Endothelial cell of umbilical vein (primary cell): ENCODE measurements at regions of chr12 and their contacts with region 1.

Region 1: DNA sequence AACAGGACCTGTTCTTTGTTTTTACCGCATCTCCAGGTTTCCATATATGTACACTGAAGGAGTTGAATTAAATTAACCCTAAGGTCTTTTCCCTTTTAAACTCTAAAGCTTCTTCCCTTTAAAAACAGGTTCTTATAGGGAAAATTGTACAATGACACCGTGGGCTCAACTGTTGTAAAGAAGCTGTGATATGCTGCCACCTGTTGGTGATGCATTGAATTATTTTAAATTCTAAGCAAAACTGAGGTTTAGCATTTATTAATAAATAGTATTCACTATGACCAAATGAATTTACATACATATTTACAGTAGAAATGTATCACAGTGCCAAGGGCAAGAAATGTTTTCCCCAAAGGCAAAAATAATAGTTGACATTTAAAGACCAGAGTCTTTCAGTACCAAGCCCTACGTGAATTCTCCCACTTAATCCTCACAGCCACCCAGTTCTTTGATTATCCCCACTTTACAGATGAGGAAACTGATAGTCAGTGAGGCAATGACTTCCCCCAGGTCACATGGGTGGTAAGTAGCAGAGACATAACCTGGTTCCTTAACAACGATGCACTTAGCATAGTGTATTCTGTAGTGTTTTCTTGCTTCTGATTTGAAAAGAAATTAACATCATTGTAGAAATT is 35.7 kb upstream of the TMEM263 start:
- DNase-seq: peak; percentile 60
- H3K4me3 ChIP-seq: no peak overlapping the region
- H3K27ac ChIP-seq: no peak overlapping the region
- H3K4me1 ChIP-seq: peaks cover 13% of the 10 kb centered on the region
- H3K27me3 ChIP-seq: peaks cover 8 to 10% of the 10 kb centered on the region in 2 experiments
- CTCF ChIP-seq: peak; percentile 37 to 54
- POLR2A ChIP-seq: no peak

Region 2: DNA sequence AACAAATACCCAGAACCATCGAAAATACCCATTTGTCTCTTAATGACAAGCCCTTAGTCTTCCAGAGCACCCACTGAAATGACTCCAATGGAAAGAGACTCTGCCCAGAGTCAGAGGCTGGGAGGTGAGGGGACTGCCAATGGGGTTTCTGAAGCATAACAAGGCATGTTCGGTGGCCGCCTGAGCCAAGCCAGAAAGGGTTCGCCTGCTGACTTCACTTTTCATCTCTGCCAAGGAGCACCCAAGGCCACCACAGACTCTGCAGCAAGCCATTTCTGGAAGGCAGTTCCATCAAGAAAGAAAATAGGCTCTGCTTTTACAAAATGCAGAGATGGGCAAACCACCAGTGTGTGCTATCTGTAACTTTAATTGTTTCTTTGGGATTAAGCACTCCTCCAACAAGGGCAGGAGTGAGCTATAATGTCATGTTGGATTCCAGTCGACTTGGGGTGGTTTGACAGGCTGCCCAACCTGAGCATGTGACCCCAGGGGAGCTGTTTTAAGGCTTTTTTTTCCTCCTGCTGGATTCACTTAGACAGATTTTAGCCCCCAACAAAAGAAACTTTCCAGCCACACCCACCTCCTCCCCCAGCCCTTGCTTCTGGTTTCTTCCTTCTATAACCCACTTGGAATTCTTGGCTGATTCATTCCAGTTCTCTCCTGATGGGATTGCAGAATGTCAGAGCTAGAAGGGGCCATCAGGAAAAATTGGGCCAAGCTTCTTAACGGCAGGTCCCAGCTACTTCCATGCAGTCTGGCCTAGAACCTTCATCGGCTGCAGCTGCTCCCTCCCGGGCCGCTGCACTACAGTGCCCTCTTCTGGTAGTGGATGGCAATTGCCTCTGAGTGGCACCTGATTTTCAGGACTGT is 696.3 kb before region 1 on chr12:
- CTCF ChIA-PET with region 1: interaction called, 18 read pairs
- POLR2A ChIA-PET with region 1: no interaction called
- dilution Hi-C with region 1: no loop called
- intact Hi-C with region 1: loop called (anchors 2 kb)
- DNase-seq: peak; percentile 75
- H3K4me3 ChIP-seq: no peak overlapping the region
- H3K27ac ChIP-seq: no peak overlapping the region
- H3K4me1 ChIP-seq: no peaks in the 10 kb centered on the region
- H3K27me3 ChIP-seq: peaks cover 9 to 13% of the 10 kb centered on the region in 2 experiments
- CTCF ChIP-seq: peak; percentile 89 to 93
- POLR2A ChIP-seq: no peak

Region 3: GRCh38 chr12:106378788-106379187 is 541.2 kb before region 1 on chr12:
- CTCF ChIA-PET with region 1: interaction called, 17 read pairs
- POLR2A ChIA-PET with region 1: no interaction called
- dilution Hi-C with region 1: no loop called
- intact Hi-C with region 1: no loop called
- DNase-seq: no peak
- H3K4me3 ChIP-seq: no peak overlapping the region
- H3K27ac ChIP-seq: no peak overlapping the region
- H3K4me1 ChIP-seq: no peaks in the 10 kb centered on the region
- H3K27me3 ChIP-seq: no peaks in the 10 kb centered on the region
- CTCF ChIP-seq: no peak
- POLR2A ChIP-seq: no peak

Region 4: GRCh38 chr12:106417926-106418910 is 501.8 kb before region 1 on chr12:
- CTCF ChIA-PET with region 1: interaction called, 15 read pairs
- POLR2A ChIA-PET with region 1: no interaction called
- dilution Hi-C with region 1: no loop called
- intact Hi-C with region 1: no loop called
- DNase-seq: no peak
- H3K4me3 ChIP-seq: peak overlapping the region in 1 of 3 experiments; percentile 14
- H3K27ac ChIP-seq: peak overlapping the region; percentile 73
- H3K4me1 ChIP-seq: peaks cover 16% of the 10 kb centered on the region
- H3K27me3 ChIP-seq: no peaks in the 10 kb centered on the region
- CTCF ChIP-seq: no peak
- POLR2A ChIP-seq: no peak

Region 5: GRCh38 chr12:106682592-106683234 is 237.3 kb before region 1 on chr12:
- CTCF ChIA-PET with region 1: interaction called, 3 read pairs
- POLR2A ChIA-PET with region 1: no interaction called
- dilution Hi-C with region 1: no loop called
- intact Hi-C with region 1: loop called (anchors 1 kb)
- DNase-seq: peak; percentile 36
- H3K4me3 ChIP-seq: no peak overlapping the region
- H3K27ac ChIP-seq: no peak overlapping the region
- H3K4me1 ChIP-seq: no peaks in the 10 kb centered on the region
- H3K27me3 ChIP-seq: peaks cover 0 to 2% of the 10 kb centered on the region in 2 experiments
- CTCF ChIP-seq: peak in 1 of 2 donors; percentile 37
- POLR2A ChIP-seq: no peak

Region 6: DNA sequence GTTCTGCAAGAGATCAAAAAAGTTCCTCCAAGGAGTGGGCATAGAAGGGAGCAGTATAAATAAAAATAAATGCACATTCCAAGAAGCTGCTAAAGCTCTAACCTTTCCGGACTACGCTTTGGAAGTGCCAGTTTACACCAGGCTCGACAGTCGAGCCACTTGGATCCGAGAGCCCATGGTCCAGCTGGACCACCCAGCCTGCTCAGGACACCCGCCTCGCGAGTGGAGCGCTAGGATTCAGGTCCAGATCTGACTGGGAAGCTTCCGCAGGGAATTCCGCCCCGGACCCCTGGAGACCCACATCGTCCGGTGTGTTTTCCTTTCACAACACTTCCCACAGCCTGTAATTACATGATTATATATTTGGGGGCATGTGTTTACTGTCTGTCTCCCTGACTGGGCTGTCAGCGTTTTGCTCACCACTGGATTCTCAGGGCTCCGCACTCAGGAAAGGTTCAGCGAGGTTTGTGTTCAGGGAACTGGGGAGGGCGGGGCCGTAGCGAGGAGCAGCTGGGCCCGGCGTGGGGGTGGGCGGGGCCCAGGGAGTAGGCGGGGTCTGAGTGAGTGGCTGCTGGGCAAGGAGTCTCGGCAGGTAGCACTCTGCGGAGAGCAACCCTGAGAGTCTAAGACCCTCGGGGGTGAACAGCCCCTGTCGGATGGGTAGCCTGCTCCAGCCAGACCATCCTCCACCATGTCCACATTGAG is 16.6 kb before region 1 on chr12:
- CTCF ChIA-PET with region 1: interaction called, 28 read pairs
- POLR2A ChIA-PET with region 1: no interaction called
- dilution Hi-C with region 1: no loop called
- intact Hi-C with region 1: no loop called
- DNase-seq: peak; percentile 67
- H3K4me3 ChIP-seq: peak overlapping the region; percentile 39 to 61 (median 48)
- H3K27ac ChIP-seq: no peak overlapping the region
- H3K4me1 ChIP-seq: no peaks in the 10 kb centered on the region
- H3K27me3 ChIP-seq: peaks cover 10 to 12% of the 10 kb centered on the region in 2 experiments
- CTCF ChIP-seq: no peak
- POLR2A ChIP-seq: no peak

Region 7: DNA sequence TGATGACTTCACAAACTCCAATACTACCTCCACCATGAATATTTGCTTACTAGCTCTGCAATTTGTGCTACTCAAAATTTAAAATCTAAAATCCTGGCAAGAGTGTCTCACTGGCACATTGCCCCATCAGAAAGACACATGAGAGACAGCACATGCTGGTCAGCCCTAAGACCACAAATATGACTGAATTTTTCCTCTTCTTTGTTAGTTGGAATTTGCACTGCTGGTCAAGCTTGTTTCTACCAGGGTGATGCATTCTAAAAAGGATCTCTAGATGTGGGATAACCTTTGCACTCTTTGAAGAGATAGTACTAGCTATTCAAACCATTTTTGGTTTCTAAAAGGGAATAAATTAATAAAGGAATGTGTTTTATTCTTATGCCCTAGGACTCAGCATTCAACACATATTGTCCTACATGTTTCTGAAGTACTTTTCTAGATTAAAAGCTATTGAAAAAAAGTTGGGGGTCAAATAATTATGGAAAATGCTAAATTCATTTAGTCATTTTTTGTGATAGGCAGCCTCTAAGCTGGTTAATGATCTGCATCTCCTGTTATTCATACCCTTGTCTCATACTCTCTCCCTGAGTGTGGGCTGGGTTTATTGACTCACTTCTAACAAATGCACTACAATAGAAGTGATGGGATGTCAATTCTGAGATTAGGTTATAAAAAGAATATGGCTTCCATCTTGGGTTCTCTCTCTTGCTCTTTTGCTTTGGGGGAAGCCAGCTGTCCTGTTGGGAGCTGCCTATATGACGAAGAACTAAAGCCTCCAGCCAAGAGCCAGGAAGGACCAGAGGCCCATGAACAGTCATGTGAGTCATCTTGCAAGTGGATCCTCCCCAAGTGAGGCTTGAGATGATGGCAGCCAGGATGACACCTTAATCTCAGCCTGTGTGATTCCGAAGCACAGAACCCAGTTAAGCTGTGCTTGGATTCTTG is 384.8 kb after region 1 on chr12:
- CTCF ChIA-PET with region 1: no interaction called
- POLR2A ChIA-PET with region 1: no interaction called
- dilution Hi-C with region 1: no loop called
- intact Hi-C with region 1: no loop called
- DNase-seq: no peak
- H3K4me3 ChIP-seq: no peak overlapping the region
- H3K27ac ChIP-seq: no peak overlapping the region
- H3K4me1 ChIP-seq: no peaks in the 10 kb centered on the region
- H3K27me3 ChIP-seq: peaks cover 3 to 6% of the 10 kb centered on the region in 2 experiments
- CTCF ChIP-seq: no peak
- POLR2A ChIP-seq: no peak